H1 (cell line): ENCODE measurements at regions of chr5 and their contacts with region 1.

Region 1: GRCh38 chr5:160230686-160231527 is 1.6 kb downstream of the FABP6 start:
- DNase-seq: no peak
- H3K4me3 ChIP-seq: no peak overlapping the region
- H3K27ac ChIP-seq: no peak overlapping the region
- H3K4me1 ChIP-seq: peaks cover 0 to 6% (median 2%) of the 10 kb centered on the region in 4 experiments; a peak in 3 of 7 replicates
- H3K27me3 ChIP-seq: no peaks in the 10 kb centered on the region
- CTCF ChIP-seq: no peak
- EP300 ChIP-seq: no peak
- POLR2A ChIP-seq: no peak
- RAD21 ChIP-seq: no peak

Region 2: GRCh38 chr5:160175438-160176218 is 55.3 kb before region 1 on chr5:
- CTCF ChIA-PET with region 1: no interaction called
- POLR2A ChIA-PET with region 1: no interaction called
- DNase-seq: no peak
- H3K4me3 ChIP-seq: no peak overlapping the region
- H3K27ac ChIP-seq: no peak overlapping the region
- H3K4me1 ChIP-seq: peaks cover 6 to 15% (median 7%) of the 10 kb centered on the region in 4 experiments; a peak in 6 of 7 replicates
- H3K27me3 ChIP-seq: no peaks in the 10 kb centered on the region
- CTCF ChIP-seq: no peak
- EP300 ChIP-seq: no peak
- POLR2A ChIP-seq: no peak
- RAD21 ChIP-seq: no peak

Region 3: DNA sequence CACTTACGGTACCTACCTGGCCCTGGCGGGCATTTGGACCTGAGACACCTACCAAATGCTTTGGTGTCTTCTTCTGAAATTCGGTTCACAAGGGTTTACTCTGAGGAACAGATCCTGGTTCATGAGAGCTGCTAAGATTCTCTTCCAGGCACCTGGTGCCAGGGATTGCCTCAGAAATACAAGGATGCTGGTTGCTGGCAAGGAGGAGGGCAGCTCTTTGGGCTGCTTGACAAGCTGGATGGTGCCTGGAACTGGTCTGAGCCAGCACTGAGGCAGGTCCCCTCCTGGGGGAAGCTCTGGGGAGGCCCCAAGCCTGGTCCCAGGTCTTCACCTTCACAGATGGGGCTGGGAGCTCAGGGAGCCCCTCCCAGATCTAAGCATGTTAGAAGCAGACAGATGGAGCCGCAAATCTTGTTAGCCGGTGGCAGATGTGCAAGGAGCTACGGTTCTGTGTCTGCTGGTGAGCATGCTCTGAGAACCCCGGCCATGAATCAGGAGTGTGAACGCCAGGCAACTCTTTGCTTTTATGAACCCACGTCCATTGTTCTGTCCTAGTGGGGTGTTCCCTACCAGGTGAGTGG is 14.7 kb after region 1 on chr5:
- CTCF ChIA-PET with region 1: interaction called, 362 read pairs
- POLR2A ChIA-PET with region 1: interaction called, 4 read pairs
- DNase-seq: no peak
- H3K4me3 ChIP-seq: no peak overlapping the region
- H3K27ac ChIP-seq: no peak overlapping the region
- H3K4me1 ChIP-seq: peaks cover 0 to 3% (median 0%) of the 10 kb centered on the region in 4 experiments; a peak in 4 of 7 replicates
- H3K27me3 ChIP-seq: no peaks in the 10 kb centered on the region
- CTCF ChIP-seq: no peak
- EP300 ChIP-seq: no peak
- POLR2A ChIP-seq: 0 out of 3 replicates have a peak, but pooled peaks of 1 of the 2 experiments have one; percentile 20
- RAD21 ChIP-seq: no peak